ENCODE measurements at regions of chr6 and their contacts with region 1.

Region 1: GRCh38 chr6:16183187-16183664 is 54.3 kb downstream of the MYLIP start:
- DNase-seq: no peak
- H3K4me3 ChIP-seq: peak overlapping the region in 1 of 4 donors; percentile 19
- H3K27ac ChIP-seq: peak overlapping the region in 1 of 4 donors; percentile 45
- H3K4me1 ChIP-seq: peaks cover 0 to 19% (median 0%) of the 10 kb centered on the region in 3 donors
- H3K27me3 ChIP-seq: no peaks in the 10 kb centered on the region
- CTCF ChIP-seq: peak; percentile 18 to 85 (median 74)
- POLR2A ChIP-seq: no peak

Region 2: GRCh38 chr6:15691250-15691869 is 491.9 kb before region 1 on chr6:
- intact Hi-C with region 1: loop called (anchors 5 kb)
- DNase-seq: peak; percentile 3
- H3K4me3 ChIP-seq: peak overlapping the region in 3 of 4 donors; percentile 29 to 46 (median 34)
- H3K27ac ChIP-seq: peak overlapping the region in 2 of 4 donors; percentile 47 to 49
- H3K4me1 ChIP-seq: peaks cover 4 to 16% (median 7%) of the 10 kb centered on the region in 3 donors
- H3K27me3 ChIP-seq: no peaks in the 10 kb centered on the region
- CTCF ChIP-seq: peak; percentile 98 to 100 (median 99)
- POLR2A ChIP-seq: no peak

Region 3: DNA sequence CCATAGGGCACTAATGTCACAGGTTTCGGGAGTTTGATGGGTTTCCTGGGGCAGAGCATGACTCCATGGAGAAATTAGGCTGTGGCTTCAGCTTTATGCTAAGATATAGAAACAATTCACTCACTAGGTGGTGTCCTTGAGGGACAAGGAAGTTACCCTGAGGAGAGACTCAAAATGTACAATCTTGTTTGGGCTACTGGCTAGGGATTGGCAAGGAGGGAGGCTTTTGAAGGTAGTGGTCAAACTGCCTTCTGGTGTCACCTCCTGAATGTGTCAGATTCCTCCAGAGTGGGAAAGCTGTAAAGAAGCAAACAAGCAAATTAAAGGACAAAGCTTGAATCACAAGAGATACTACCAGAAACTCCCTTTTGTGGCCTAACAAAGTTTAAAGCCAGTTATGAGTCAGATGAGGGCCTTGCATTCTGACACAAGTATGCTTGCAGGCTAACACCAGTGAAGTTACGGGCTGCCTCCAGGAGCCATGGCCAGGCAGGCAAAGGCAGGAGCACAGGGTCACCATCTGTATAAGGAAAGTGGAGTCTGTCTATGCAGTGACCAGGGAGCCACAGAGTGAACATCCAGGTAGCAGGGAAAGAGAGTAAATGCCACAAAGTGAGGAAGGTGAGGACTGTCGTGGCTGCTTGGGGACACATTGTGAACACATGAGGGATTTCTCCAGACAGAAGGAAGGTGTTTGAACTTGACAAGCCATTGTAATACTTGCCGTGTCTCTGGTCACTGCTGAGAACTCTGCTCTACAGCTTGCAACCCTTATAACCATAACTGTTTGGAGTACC is 412.7 kb before region 1 on chr6:
- intact Hi-C with region 1: loop called (anchors 10 kb)
- DNase-seq: no peak
- H3K4me3 ChIP-seq: no peak overlapping the region
- H3K27ac ChIP-seq: peak overlapping the region in 1 of 4 donors; percentile 7
- H3K4me1 ChIP-seq: peaks cover 0 to 17% (median 0%) of the 10 kb centered on the region in 3 donors
- H3K27me3 ChIP-seq: no peaks in the 10 kb centered on the region
- CTCF ChIP-seq: peak in 2 of 6 experiments; percentile 5 to 8
- POLR2A ChIP-seq: no peak

Region 4: DNA sequence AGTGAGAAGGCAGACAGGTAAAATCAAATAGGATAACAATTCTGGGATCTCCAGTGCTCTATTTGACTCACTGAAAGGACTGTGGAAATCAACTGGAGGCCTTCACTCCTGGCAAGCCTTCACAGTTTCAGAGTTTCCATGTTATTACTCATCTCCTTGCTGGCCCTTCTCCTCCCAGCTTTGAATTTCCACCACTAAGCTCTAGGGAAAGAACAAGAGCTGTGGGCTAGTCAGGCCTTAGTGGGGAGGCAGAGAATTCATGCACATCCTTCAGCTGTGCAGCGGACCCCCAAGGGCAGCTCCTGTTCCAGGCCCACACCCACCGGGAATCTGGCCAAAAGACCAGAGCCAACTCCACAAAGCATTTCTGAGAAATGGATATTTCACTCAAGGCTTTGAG is 28.3 kb before region 1 on chr6:
- intact Hi-C with region 1: no loop called
- DNase-seq: no peak
- H3K4me3 ChIP-seq: no peak overlapping the region
- H3K27ac ChIP-seq: no peak overlapping the region
- H3K4me1 ChIP-seq: peaks cover 0 to 12% (median 0%) of the 10 kb centered on the region in 3 donors
- H3K27me3 ChIP-seq: no peaks in the 10 kb centered on the region
- CTCF ChIP-seq: no peak
- POLR2A ChIP-seq: no peak

Region 5: DNA sequence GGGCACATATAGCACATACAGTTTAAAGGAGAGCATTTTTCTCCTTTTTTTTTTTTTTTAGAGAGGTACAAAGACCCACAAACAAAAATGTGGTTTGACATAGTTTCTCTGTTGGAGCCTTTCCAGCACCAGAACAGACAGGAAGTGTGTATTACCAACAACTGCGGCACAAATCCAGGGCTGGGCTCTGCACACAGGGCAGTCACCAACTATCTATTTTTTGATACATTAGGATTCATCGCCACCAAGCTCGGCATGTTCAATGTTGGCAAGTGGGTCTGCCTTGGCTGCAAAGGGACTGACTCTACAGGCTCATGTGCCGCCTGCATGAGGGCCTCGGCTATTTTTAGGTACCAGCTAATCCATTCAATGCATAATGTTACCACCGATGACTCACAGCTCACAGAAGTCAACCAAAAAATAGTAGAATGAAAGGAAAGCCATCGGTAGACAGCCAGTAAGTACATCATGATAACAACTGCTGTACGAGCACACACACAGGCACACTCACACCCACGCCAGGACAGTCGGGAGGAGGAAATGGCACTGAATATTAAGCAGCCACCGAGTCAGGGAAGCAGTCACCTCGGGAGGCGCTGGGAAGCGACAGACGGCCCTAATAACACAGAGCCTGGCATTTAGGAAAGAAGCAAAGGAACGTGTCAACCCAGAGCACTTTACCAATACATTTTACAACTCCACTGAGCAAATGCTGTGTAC is 136.7 kb after region 1 on chr6:
- intact Hi-C with region 1: no loop called
- DNase-seq: no peak
- H3K4me3 ChIP-seq: peak overlapping the region; percentile 5 to 52 (median 18)
- H3K27ac ChIP-seq: peak overlapping the region; percentile 67 to 89 (median 85)
- H3K4me1 ChIP-seq: peaks cover 16 to 71% (median 44%) of the 10 kb centered on the region in 3 donors
- H3K27me3 ChIP-seq: no peaks in the 10 kb centered on the region
- CTCF ChIP-seq: no peak
- POLR2A ChIP-seq: no peak

Region 6: GRCh38 chr6:16471222-16471909 is 288.1 kb after region 1 on chr6:
- intact Hi-C with region 1: no loop called
- DNase-seq: no peak
- H3K4me3 ChIP-seq: no peak overlapping the region
- H3K27ac ChIP-seq: no peak overlapping the region
- H3K4me1 ChIP-seq: peaks cover 2 to 18% (median 6%) of the 10 kb centered on the region in 3 donors
- H3K27me3 ChIP-seq: no peaks in the 10 kb centered on the region
- CTCF ChIP-seq: no peak
- POLR2A ChIP-seq: no peak

Region 7: GRCh38 chr6:16625291-16626265 is 442.4 kb after region 1 on chr6:
- intact Hi-C with region 1: no loop called
- DNase-seq: no peak
- H3K4me3 ChIP-seq: no peak overlapping the region
- H3K27ac ChIP-seq: no peak overlapping the region
- H3K4me1 ChIP-seq: peaks cover 0 to 27% (median 8%) of the 10 kb centered on the region in 3 donors
- H3K27me3 ChIP-seq: no peaks in the 10 kb centered on the region
- CTCF ChIP-seq: no peak
- POLR2A ChIP-seq: no peak